IMR-90 (cell line): ENCODE measurements at regions of chr1 and their contacts with region 1.

Region 1: GRCh38 chr1:18913065-18913835 is 10.9 kb upstream of the ALDH4A1 start:
- DNase-seq: peak; percentile 82
- ATAC-seq: peak; percentile 99
- H3K4me3 ChIP-seq: no peak overlapping the region
- H3K27ac ChIP-seq: peak overlapping the region; percentile 11; the same call in 1 of the 2 replicates
- H3K4me1 ChIP-seq: peaks cover 4% of the 10 kb centered on the region; the same call in 1 of the 2 replicates
- H3K27me3 ChIP-seq: no peaks in the 10 kb centered on the region
- CTCF ChIP-seq: peak; percentile 100; the same call in 1 of the 2 replicates
- POLR2A ChIP-seq: peak; percentile 56; the same call in 1 of the 2 replicates
- RAD21 ChIP-seq: peak; percentile 98

Region 2: DNA sequence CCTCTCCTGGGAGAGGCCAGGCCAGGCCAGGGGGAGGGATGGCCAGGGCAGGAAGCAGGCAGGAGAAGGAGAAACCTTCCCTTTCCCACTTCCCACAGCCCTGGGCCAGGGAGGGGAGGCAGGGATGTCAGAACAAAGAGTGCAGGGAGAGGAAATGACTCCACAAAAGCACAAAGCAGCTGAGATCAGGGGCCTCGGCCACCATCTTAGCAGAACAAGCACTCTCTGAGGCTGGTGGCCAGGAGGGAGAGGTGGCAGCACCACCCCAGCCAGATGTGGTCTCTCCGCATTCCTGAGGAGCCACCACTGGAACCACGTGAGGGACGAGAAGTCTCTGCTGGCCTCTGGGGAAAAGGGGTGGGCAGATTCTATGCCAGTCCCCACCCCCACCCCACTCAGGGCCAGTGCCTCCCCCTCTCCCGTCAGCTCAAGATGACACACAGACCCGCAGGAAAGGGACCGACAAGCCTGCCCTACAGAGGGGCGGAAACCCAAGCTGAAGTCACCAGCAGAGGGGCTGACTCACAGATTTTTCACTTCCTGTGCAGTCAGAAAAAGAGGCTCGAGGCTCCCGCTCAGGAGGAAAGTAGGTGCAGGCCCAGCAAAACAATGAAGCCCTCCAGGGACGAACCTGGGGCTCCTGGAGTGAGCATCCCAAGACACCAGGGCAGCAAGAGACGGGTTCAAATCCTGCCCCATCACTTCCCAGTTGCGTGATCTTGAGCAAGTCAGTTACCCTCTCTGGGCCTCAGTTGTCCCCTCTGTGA is 13.2 kb after region 1 on chr1:
- CTCF ChIA-PET with region 1: interaction called, 15 read pairs
- POLR2A ChIA-PET with region 1: no interaction called
- dilution Hi-C with region 1: no loop called
- in situ Hi-C with region 1: no loop called
- intact Hi-C with region 1: no loop called
- DNase-seq: peak; percentile 96
- ATAC-seq: peak; percentile 82
- H3K4me3 ChIP-seq: no peak overlapping the region
- H3K27ac ChIP-seq: peak overlapping the region; percentile 94
- H3K4me1 ChIP-seq: peaks cover 57% of the 10 kb centered on the region
- H3K27me3 ChIP-seq: no peaks in the 10 kb centered on the region
- CTCF ChIP-seq: no peak
- POLR2A ChIP-seq: no peak
- RAD21 ChIP-seq: no peak

Region 3: DNA sequence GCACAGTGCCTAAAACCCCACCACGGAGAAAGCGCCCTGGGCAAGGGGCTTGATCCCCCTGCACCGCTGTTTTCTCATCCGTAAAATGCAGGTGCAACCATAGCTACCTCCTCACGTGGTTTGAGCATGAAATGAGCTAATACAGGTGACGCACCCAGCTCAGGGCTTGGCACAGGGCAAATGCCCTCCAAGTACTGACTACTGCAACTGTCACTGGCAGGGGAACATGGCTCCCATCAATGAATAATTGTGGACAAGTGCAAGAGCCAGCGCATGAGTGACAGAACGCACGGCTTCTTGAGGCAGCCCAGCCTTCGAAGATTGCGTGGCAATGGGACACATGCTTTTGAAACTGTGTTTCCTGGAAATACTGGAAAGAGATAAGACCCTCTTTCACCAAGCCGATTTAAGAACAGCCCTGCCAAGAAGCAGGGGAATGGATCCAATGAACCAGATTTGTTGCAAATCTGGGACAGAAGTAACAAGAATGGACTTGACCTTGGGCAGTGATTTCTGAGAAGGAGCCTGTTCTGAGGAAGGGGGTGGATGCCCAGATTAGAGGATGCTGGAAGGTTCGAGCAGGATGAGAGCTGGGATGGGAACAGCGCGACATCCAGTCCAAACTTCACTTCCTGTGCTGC is 136.0 kb after region 1 on chr1:
- CTCF ChIA-PET with region 1: no interaction called
- POLR2A ChIA-PET with region 1: no interaction called
- dilution Hi-C with region 1: no loop called
- in situ Hi-C with region 1: no loop called
- intact Hi-C with region 1: loop called (anchors 1 kb)
- DNase-seq: no peak
- ATAC-seq: no peak
- H3K4me3 ChIP-seq: no peak overlapping the region
- H3K27ac ChIP-seq: no peak overlapping the region
- H3K4me1 ChIP-seq: no peaks in the 10 kb centered on the region
- H3K27me3 ChIP-seq: peaks cover 26% of the 10 kb centered on the region
- CTCF ChIP-seq: no peak
- POLR2A ChIP-seq: no peak
- RAD21 ChIP-seq: no peak

Region 4: GRCh38 chr1:19087737-19088594 is 174.7 kb after region 1 on chr1:
- CTCF ChIA-PET with region 1: interaction called, 16 read pairs
- POLR2A ChIA-PET with region 1: no interaction called
- dilution Hi-C with region 1: no loop called
- in situ Hi-C with region 1: loop called (anchors 5 kb)
- intact Hi-C with region 1: loop called (anchors 1 kb)
- DNase-seq: peak; percentile 14
- ATAC-seq: no peak
- H3K4me3 ChIP-seq: no peak overlapping the region
- H3K27ac ChIP-seq: peak overlapping the region; percentile 35; the same call in 1 of the 2 replicates
- H3K4me1 ChIP-seq: peaks cover 33% of the 10 kb centered on the region
- H3K27me3 ChIP-seq: no peaks in the 10 kb centered on the region
- CTCF ChIP-seq: no peak
- POLR2A ChIP-seq: no peak
- RAD21 ChIP-seq: no peak

Region 5: GRCh38 chr1:19240673-19241538 is 327.7 kb after region 1 on chr1:
- CTCF ChIA-PET with region 1: no interaction called
- POLR2A ChIA-PET with region 1: no interaction called
- dilution Hi-C with region 1: no loop called
- in situ Hi-C with region 1: no loop called
- intact Hi-C with region 1: loop called (anchors 2 kb)
- DNase-seq: peak; percentile 69
- ATAC-seq: peak; percentile 99
- H3K4me3 ChIP-seq: no peak overlapping the region
- H3K27ac ChIP-seq: no peak overlapping the region
- H3K4me1 ChIP-seq: no peaks in the 10 kb centered on the region
- H3K27me3 ChIP-seq: no peaks in the 10 kb centered on the region
- CTCF ChIP-seq: peak; percentile 95
- POLR2A ChIP-seq: no peak
- RAD21 ChIP-seq: peak; percentile 87